IMR-90 (cell line): ENCODE measurements at regions of chr3 and their contacts with region 1.

Region 1: DNA sequence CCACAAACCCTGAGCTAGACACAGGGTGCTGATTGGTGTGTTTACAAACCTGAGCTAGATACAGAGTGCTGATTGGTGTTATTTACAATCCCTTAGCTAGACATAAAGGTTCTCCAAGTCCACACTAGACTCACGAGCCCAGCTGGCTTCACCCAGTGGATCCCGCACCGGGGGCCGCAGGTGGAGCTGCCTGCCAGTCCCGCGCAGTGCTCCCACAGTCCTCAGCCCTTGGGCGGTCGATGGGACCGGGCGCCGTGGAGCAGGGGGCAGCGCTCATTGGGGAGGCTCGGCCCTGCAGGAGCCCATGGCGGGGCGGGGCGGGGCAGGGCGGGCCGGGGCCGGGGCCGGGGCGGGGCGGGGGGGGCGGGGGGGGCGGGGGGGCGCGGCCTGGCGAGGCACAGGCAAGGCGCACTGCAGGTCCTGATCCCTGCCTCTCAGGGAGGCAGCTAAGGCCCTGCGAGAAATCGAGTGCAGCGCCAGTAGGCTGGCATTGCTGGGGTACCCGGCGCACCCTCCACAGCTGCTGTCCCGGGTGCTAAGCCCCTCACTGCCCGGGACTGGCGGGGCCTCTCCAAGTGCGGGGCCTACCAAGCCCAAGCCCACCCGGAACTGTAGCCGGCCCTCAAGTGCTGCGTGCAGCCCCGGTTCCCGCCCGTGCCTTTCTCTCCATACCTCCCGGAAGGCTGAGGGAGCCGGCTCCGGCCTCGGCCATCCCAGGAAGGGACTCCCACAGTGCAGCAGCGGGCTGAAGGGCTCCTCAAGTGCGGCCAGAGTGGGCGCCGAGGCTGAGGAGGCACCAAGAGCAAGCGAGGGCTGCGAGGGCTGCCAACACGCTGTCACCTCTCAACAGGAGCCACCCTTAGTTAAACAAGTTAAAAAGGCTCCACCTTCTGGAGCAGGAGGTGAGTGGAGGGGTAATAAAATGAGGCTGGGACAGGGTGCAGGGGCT is 9.8 kb upstream of the TMEM40 start:
- DNase-seq: no peak
- ATAC-seq: no peak
- H3K4me3 ChIP-seq: no peak overlapping the region
- H3K27ac ChIP-seq: no peak overlapping the region
- H3K4me1 ChIP-seq: peaks cover 3% of the 10 kb centered on the region; the same call in 1 of the 2 replicates
- H3K27me3 ChIP-seq: peaks cover under 1% of the 10 kb centered on the region; the same call in 1 of the 2 replicates
- CTCF ChIP-seq: no peak
- POLR2A ChIP-seq: no peak
- RAD21 ChIP-seq: no peak

Region 2: DNA sequence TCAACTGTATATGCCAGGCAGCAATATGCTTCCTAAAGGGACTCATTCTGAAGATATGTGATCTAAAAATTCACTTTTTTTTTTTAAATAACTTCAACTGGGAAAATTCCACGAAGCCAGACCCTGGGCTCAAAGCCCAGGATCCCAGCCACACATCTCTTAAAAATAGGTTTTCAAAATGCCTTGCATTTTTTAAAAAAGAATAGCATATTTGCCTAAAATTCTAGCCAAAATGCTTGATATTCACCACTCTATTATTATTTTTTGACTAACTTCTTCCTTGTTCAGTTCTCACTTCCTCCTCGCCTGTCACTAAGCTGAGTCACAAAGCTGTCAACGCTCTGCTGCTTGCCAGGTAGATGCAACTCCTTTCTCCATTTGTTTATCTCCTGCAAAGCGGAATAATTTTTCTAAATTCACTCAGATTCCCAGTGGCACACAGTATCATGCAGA is 1097.2 kb before region 1 on chr3:
- CTCF ChIA-PET with region 1: no interaction called
- POLR2A ChIA-PET with region 1: interaction called, 10 read pairs
- dilution Hi-C with region 1: no loop called
- in situ Hi-C with region 1: no loop called
- intact Hi-C with region 1: no loop called
- DNase-seq: peak; percentile 54
- ATAC-seq: peak; percentile 66
- H3K4me3 ChIP-seq: no peak overlapping the region
- H3K27ac ChIP-seq: no peak overlapping the region
- H3K4me1 ChIP-seq: peaks cover 8% of the 10 kb centered on the region
- H3K27me3 ChIP-seq: no peaks in the 10 kb centered on the region
- CTCF ChIP-seq: no peak
- POLR2A ChIP-seq: no peak
- RAD21 ChIP-seq: no peak

Region 3: GRCh38 chr3:12730506-12731242 is 38.2 kb before region 1 on chr3:
- CTCF ChIA-PET with region 1: no interaction called
- POLR2A ChIA-PET with region 1: no interaction called
- dilution Hi-C with region 1: no loop called
- in situ Hi-C with region 1: no loop called
- intact Hi-C with region 1: no loop called
- DNase-seq: no peak
- ATAC-seq: no peak
- H3K4me3 ChIP-seq: no peak overlapping the region
- H3K27ac ChIP-seq: no peak overlapping the region
- H3K4me1 ChIP-seq: peaks cover 3% of the 10 kb centered on the region; the same call in 1 of the 2 replicates
- H3K27me3 ChIP-seq: peaks cover 4% of the 10 kb centered on the region; the same call in 1 of the 2 replicates
- CTCF ChIP-seq: no peak
- POLR2A ChIP-seq: no peak
- RAD21 ChIP-seq: no peak

Region 4: DNA sequence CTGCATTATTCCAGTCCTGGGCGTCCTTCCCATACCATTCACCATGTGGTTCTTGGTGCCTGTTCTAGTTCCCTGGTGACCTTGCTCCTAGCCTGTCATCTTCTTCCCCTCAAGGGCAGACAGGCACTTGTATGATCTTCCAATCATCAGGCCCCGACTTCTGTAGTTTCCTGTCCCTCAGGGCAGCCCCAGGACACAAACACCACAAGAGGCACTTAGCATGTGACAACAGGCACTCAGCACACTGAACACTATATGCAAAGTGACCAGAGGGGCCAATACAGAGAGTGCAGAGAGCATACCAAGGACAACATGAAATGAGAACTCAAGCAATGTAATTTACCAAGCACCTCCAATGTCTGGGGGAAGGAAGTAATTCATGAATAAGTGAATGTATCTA is 27.6 kb before region 1 on chr3:
- CTCF ChIA-PET with region 1: no interaction called
- POLR2A ChIA-PET with region 1: no interaction called
- dilution Hi-C with region 1: no loop called
- in situ Hi-C with region 1: no loop called
- intact Hi-C with region 1: no loop called
- DNase-seq: no peak
- ATAC-seq: no peak
- H3K4me3 ChIP-seq: no peak overlapping the region
- H3K27ac ChIP-seq: no peak overlapping the region
- H3K4me1 ChIP-seq: no peaks in the 10 kb centered on the region
- H3K27me3 ChIP-seq: peaks cover 16% of the 10 kb centered on the region
- CTCF ChIP-seq: no peak
- POLR2A ChIP-seq: no peak
- RAD21 ChIP-seq: no peak

Region 5: GRCh38 chr3:14740983-14741382 is 1972.1 kb after region 1 on chr3:
- CTCF ChIA-PET with region 1: no interaction called
- POLR2A ChIA-PET with region 1: interaction called, 10 read pairs
- dilution Hi-C with region 1: no loop called
- in situ Hi-C with region 1: no loop called
- intact Hi-C with region 1: no loop called
- DNase-seq: no peak
- ATAC-seq: no peak
- H3K4me3 ChIP-seq: no peak overlapping the region
- H3K27ac ChIP-seq: no peak overlapping the region
- H3K4me1 ChIP-seq: no peaks in the 10 kb centered on the region
- H3K27me3 ChIP-seq: 0 out of 2 replicates have a peak, but pooled peaks cover 1% of the 10 kb centered on the region
- CTCF ChIP-seq: no peak
- POLR2A ChIP-seq: no peak
- RAD21 ChIP-seq: no peak